PC-3 (cell line): ENCODE measurements at regions of chr16 and their contacts with region 1.

Region 1: GRCh38 chr16:48623304-48624016 is 13.5 kb upstream of the N4BP1 start:
- DNase-seq: peak; percentile 84
- ATAC-seq: peak; percentile 99
- H3K4me3 ChIP-seq: peak overlapping the region; percentile 66
- H3K27ac ChIP-seq: no peak overlapping the region
- H3K4me1 ChIP-seq: no peaks in the 10 kb centered on the region
- H3K27me3 ChIP-seq: no peaks in the 10 kb centered on the region
- CTCF ChIP-seq: peak; percentile 86

Region 2: DNA sequence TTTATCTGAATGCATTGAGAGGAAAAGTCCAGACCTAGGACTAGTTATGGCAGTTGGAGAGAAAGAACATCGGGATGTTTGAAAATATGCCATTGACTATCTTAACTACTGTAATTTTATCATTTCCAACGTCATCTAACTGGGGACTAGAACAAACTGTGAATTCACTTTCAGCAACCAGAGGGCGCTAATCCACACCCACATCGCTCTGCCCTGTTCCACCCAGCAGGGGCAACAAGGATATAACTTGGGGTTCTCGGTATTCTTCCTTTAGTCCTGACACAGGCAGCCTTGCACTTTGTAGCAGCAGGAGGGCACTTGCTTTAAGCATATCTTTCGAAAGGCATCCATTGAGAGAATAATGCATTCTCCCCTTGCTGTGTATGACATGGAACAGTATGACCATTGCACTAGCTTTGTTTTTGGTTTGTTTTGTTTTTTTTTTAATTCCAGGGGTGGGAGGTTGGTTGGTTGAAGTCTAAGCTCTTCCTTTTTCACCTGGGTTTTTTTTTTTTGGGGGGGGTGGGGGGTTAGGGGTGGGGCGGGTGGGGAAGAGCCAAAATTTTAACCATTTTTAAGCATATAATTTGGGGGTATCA is 269.8 kb before region 1 on chr16:
- CTCF ChIA-PET with region 1: interaction called, 4 read pairs
- POLR2A ChIA-PET with region 1: interaction called, 3 read pairs
- intact Hi-C with region 1: loop called (anchors 5 kb)
- DNase-seq: peak; percentile 69
- ATAC-seq: peak; percentile 89
- H3K4me3 ChIP-seq: no peak overlapping the region
- H3K27ac ChIP-seq: no peak overlapping the region
- H3K4me1 ChIP-seq: no peaks in the 10 kb centered on the region
- H3K27me3 ChIP-seq: no peaks in the 10 kb centered on the region
- CTCF ChIP-seq: peak; percentile 84

Region 3: GRCh38 chr16:48452977-48453760 is 170.3 kb before region 1 on chr16:
- CTCF ChIA-PET with region 1: no interaction called
- POLR2A ChIA-PET with region 1: no interaction called
- intact Hi-C with region 1: loop called (anchors 10 kb)
- DNase-seq: no peak
- ATAC-seq: no peak
- H3K4me3 ChIP-seq: no peak overlapping the region
- H3K27ac ChIP-seq: no peak overlapping the region
- H3K4me1 ChIP-seq: peaks cover 6% of the 10 kb centered on the region
- H3K27me3 ChIP-seq: no peaks in the 10 kb centered on the region
- CTCF ChIP-seq: no peak

Region 4: DNA sequence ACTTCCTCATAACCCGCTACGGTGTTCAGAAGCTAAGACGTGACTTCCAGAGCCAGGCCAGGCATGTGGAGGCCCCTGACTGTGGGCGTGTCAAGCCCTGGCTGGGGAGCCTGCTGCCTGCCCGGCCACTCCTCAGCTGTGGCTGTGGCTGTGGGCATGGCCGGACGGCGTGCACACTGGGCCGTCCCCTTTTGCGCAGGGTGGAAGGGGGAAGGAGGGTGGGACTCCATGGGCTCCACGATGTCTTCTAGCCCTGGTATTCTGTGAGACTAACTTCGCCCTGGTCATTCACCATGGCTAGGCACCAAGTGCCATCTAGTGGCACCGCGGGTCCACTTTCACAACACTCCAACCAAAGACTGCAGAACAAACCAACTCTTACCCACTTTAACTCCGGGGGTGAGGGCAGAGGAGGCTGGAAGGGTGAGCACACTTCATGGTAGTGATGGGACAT is 81.4 kb before region 1 on chr16:
- CTCF ChIA-PET with region 1: interaction called, 3 read pairs
- POLR2A ChIA-PET with region 1: no interaction called
- intact Hi-C with region 1: loop called (anchors 5 kb)
- DNase-seq: peak; percentile 37
- ATAC-seq: peak; percentile 76
- H3K4me3 ChIP-seq: no peak overlapping the region
- H3K27ac ChIP-seq: no peak overlapping the region
- H3K4me1 ChIP-seq: no peaks in the 10 kb centered on the region
- H3K27me3 ChIP-seq: no peaks in the 10 kb centered on the region
- CTCF ChIP-seq: peak; percentile 58

Region 5: DNA sequence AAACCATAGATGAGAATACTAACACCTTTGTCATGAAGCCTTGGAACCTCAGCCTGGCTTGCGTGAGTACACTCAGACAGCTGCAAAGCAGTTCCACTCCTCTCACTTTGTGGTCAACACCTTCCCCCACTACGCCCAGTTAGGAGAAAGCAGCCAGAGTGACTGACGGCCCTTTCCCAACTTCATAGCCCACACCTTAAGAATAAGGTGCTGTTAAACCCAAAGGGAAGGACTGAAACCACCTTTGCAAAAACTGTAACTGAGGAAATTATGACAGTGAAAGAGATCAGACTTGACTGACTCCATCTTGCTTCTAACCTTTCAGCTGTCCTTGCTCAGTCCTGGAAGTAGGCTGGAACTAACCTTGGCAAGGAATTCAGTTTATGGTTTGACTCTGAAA is 27.1 kb before region 1 on chr16:
- CTCF ChIA-PET with region 1: no interaction called
- POLR2A ChIA-PET with region 1: no interaction called
- intact Hi-C with region 1: no loop called
- DNase-seq: no peak
- ATAC-seq: no peak
- H3K4me3 ChIP-seq: no peak overlapping the region
- H3K27ac ChIP-seq: no peak overlapping the region
- H3K4me1 ChIP-seq: no peaks in the 10 kb centered on the region
- H3K27me3 ChIP-seq: no peaks in the 10 kb centered on the region
- CTCF ChIP-seq: no peak